ENCODE measurements at regions of chr20 and their contacts with region 1.

Region 1: GRCh38 chr20:9160757-9161156 is 91.9 kb downstream of the PLCB4 start:
- DNase-seq: peak in 2 of 3 donors; percentile 49 to 63
- H3K4me3 ChIP-seq: peak overlapping the region in 6 of 7 experiments; percentile 60 to 80 (median 63)
- H3K27ac ChIP-seq: peak overlapping the region; percentile 59 to 78
- H3K4me1 ChIP-seq: peaks cover 24 to 58% (median 34%) of the 10 kb centered on the region in 4 experiments
- H3K27me3 ChIP-seq: no peaks in the 10 kb centered on the region

Region 2: DNA sequence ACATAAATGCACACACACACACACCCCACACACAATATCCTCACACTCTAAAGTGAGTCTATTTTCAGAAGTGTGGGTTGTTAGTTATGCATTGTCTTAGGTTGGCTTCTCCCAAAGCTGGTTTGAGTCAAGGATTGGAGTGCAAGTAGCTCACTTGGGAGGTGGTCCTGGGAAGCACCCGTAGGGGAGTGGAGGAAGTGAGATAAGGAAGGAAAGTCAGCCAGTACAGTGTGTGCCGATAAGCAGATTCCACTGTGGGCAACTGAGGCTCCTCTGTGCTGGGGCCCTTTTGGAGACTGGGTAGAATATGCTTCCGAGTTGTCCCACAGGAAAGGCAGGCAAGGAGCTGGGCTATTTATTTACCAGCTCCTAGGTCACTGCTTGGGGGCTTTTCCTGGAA is 24.6 kb before region 1 on chr20:
- CTCF ChIA-PET with region 1: interaction called, 10 read pairs
- POLR2A ChIA-PET with region 1: interaction called, 7 read pairs
- DNase-seq: peak; percentile 71 to 85 (median 77)
- H3K4me3 ChIP-seq: peak overlapping the region in 1 of 7 experiments; percentile 52
- H3K27ac ChIP-seq: peak overlapping the region; percentile 5 to 69
- H3K4me1 ChIP-seq: peaks cover 5 to 23% (median 17%) of the 10 kb centered on the region in 4 experiments
- H3K27me3 ChIP-seq: no peaks in the 10 kb centered on the region

Region 3: DNA sequence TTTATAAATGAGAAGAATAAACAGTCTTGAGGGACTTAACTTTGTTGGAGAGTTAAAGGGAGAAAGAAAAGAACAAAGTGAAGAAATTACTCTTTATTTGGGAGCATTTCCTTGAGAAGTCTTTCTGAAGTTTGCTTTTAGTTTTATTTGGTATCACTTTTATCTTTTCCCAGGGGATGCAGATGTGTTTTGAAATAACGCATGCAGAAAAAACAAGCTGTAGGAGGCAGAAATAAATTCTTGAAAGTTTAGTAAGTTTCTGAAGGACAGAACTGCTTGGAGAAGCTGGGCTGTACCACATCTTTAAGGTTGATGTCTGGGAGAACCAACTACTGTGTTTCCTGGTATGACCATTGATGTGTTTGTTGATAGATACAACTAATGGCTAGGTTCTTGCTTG is 16.8 kb before region 1 on chr20:
- CTCF ChIA-PET with region 1: interaction called, 13 read pairs
- POLR2A ChIA-PET with region 1: no interaction called
- DNase-seq: no peak
- H3K4me3 ChIP-seq: no peak overlapping the region
- H3K27ac ChIP-seq: no peak overlapping the region
- H3K4me1 ChIP-seq: peaks cover 11 to 33% (median 16%) of the 10 kb centered on the region in 4 experiments
- H3K27me3 ChIP-seq: no peaks in the 10 kb centered on the region